H1 (cell line): ENCODE measurements at regions of chr5 and their contacts with region 1.

Region 1: GRCh38 chr5:159444441-159445082 is 114.3 kb upstream of the IL12B start:
- DNase-seq: no peak
- H3K4me3 ChIP-seq: no peak overlapping the region
- H3K27ac ChIP-seq: no peak overlapping the region
- H3K4me1 ChIP-seq: peaks cover 0 to 10% (median 2%) of the 10 kb centered on the region in 4 experiments; a peak in 4 of 7 replicates
- H3K27me3 ChIP-seq: no peaks in the 10 kb centered on the region
- CTCF ChIP-seq: peak in 2 of 3 experiments; percentile 35 to 46; a peak in 2 of 4 replicates
- EP300 ChIP-seq: no peak
- POLR2A ChIP-seq: no peak
- RAD21 ChIP-seq: peak; percentile 83 to 85

Region 2: DNA sequence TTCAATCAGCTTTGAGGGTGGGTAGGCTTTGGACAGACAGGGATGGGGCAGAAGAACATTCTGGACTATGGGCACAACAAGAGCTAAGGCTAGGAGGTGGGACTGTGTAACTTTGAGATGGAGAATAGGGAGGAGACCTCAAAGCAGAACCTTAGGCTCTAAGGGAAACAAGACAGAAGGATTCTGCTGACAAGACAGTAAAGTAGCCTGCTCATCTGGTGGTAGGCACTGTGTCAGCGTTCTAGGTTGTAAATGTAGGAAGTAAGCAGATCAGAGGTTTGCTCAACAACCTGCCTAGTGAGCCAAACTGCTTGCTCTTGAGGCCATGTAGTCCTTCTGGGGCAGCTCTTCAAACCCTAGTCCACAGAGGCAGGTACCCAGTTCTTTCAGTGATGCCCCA is 99.2 kb before region 1 on chr5:
- CTCF ChIA-PET with region 1: no interaction called
- POLR2A ChIA-PET with region 1: no interaction called
- DNase-seq: no peak
- H3K4me3 ChIP-seq: no peak overlapping the region
- H3K27ac ChIP-seq: no peak overlapping the region
- H3K4me1 ChIP-seq: no peaks in the 10 kb centered on the region
- H3K27me3 ChIP-seq: no peaks in the 10 kb centered on the region
- CTCF ChIP-seq: no peak
- EP300 ChIP-seq: no peak
- POLR2A ChIP-seq: no peak
- RAD21 ChIP-seq: no peak

Region 3: GRCh38 chr5:159409801-159410200 is 34.8 kb before region 1 on chr5:
- CTCF ChIA-PET with region 1: interaction called, 10 read pairs
- POLR2A ChIA-PET with region 1: no interaction called
- DNase-seq: no peak
- H3K4me3 ChIP-seq: no peak overlapping the region
- H3K27ac ChIP-seq: no peak overlapping the region
- H3K4me1 ChIP-seq: peaks cover 0 to 5% (median 3%) of the 10 kb centered on the region in 4 experiments; a peak in 3 of 7 replicates
- H3K27me3 ChIP-seq: no peaks in the 10 kb centered on the region
- CTCF ChIP-seq: no peak
- EP300 ChIP-seq: no peak
- POLR2A ChIP-seq: no peak
- RAD21 ChIP-seq: no peak

Region 4: DNA sequence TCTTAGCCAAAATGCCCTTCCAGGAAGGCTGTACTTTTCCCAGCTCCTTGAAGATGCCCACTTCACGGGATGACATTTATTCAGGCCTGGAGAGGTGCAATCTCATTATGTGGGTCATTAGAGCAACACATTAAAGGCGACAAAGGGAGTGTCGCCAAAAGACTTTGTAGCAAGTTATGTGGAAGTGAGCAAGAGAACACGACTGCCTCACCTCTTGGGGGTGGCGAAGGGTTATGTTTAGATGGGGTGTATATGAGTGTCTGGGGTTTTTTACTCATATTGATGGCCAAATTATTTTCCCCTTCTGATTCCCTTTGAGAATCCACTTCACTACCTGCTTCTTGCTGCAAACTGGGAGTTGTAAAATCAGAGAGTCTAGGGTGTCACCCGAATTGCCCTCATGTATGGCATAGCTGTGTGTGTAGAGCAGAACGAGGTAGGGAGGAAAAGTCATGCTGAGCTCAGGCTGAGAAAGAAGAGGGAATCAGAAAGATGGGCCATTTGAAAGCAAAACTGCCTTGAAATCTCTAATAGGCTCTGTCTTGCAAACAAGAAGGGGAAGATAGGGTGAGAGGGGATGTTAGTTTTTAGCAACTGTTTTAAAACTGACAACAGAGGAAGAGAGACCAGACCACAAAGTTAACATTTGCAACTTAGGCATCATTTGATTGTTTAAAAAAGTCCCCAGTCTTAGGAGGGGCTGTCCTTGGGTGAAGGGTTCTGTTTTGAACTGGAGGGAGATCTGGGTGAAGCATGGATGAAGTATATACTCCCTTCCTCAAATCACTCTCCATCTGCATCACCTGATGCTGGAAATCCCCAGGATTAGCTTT is 17.2 kb before region 1 on chr5:
- CTCF ChIA-PET with region 1: interaction called, 30 read pairs
- POLR2A ChIA-PET with region 1: no interaction called
- DNase-seq: no peak
- H3K4me3 ChIP-seq: no peak overlapping the region
- H3K27ac ChIP-seq: no peak overlapping the region
- H3K4me1 ChIP-seq: peaks cover 0 to 2% (median 0%) of the 10 kb centered on the region in 4 experiments; a peak in 1 of 7 replicates
- H3K27me3 ChIP-seq: peaks cover 0 to 1% (median 0%) of the 10 kb centered on the region in 4 experiments; a peak in 1 of 7 replicates
- CTCF ChIP-seq: no peak
- EP300 ChIP-seq: no peak
- POLR2A ChIP-seq: no peak
- RAD21 ChIP-seq: no peak

Region 5: GRCh38 chr5:159515909-159516415 is 71.4 kb after region 1 on chr5:
- CTCF ChIA-PET with region 1: interaction called, 34 read pairs
- POLR2A ChIA-PET with region 1: no interaction called
- DNase-seq: peak; percentile 58 to 84
- H3K4me3 ChIP-seq: no peak overlapping the region
- H3K27ac ChIP-seq: no peak overlapping the region
- H3K4me1 ChIP-seq: no peaks in the 10 kb centered on the region
- H3K27me3 ChIP-seq: no peaks in the 10 kb centered on the region
- CTCF ChIP-seq: peak; percentile 82 to 95 (median 86)
- EP300 ChIP-seq: no peak
- POLR2A ChIP-seq: no peak
- RAD21 ChIP-seq: peak; percentile 83 to 84

Region 6: DNA sequence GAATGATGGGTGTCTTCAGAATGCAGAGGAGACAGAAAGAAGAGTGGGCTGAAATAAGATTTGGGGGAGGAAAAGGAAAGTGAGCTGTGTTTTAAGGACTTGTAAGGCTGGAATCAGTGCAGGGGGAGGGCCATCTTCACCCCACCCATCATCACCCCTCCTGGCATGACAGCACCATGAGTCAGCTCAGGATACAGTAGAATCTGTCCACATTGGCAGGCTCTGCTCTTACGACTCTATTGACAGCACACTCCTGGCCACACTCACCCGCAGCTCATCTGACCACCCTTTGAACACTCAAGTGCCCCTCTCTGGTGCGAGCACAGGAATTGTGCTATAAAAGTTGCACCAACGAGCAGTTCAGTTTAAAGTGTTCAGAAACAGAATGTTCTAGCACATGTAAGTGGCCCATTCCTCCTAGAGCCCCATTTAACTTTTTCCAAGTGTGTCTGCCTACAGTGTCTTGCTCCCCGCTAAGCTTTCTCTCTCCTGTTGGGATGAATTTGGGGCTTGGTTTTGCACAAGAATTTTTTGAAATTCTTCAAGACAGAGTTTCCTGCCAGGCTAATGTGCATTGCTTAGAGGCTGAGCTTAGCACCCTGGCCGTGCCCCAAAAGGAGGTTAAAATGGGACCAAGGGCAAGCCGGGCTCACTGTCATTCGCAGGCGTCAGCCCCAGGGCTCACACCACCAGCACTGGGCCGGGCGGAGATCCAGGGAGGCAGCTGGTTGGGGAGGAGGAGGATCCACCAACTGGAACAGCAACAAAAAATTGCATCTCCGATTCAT is 483.8 kb after region 1 on chr5:
- CTCF ChIA-PET with region 1: interaction called, 10 read pairs
- POLR2A ChIA-PET with region 1: no interaction called
- DNase-seq: no peak
- H3K4me3 ChIP-seq: no peak overlapping the region
- H3K27ac ChIP-seq: no peak overlapping the region
- H3K4me1 ChIP-seq: peaks cover 0 to 2% (median 0%) of the 10 kb centered on the region in 4 experiments; a peak in 1 of 7 replicates
- H3K27me3 ChIP-seq: no peaks in the 10 kb centered on the region; a peak in 1 of 7 replicates
- CTCF ChIP-seq: no peak
- EP300 ChIP-seq: no peak
- POLR2A ChIP-seq: no peak
- RAD21 ChIP-seq: no peak

Region 7: GRCh38 chr5:159965031-159965837 is 520.7 kb after region 1 on chr5:
- CTCF ChIA-PET with region 1: interaction called, 21 read pairs
- POLR2A ChIA-PET with region 1: no interaction called
- DNase-seq: peak in 1 of 2 experiments; percentile 85
- H3K4me3 ChIP-seq: no peak overlapping the region
- H3K27ac ChIP-seq: no peak overlapping the region
- H3K4me1 ChIP-seq: no peaks in the 10 kb centered on the region
- H3K27me3 ChIP-seq: peaks cover under 1 to 2% (median under 1%) of the 10 kb centered on the region in 4 experiments; a peak in 4 of 7 replicates
- CTCF ChIP-seq: peak; percentile 73 to 89 (median 78)
- EP300 ChIP-seq: no peak
- POLR2A ChIP-seq: no peak
- RAD21 ChIP-seq: peak; percentile 88 to 92

Region 8: GRCh38 chr5:159987031-159987674 is 542.6 kb after region 1 on chr5:
- CTCF ChIA-PET with region 1: interaction called, 66 read pairs
- POLR2A ChIA-PET with region 1: no interaction called
- DNase-seq: peak; percentile 65 to 89
- H3K4me3 ChIP-seq: peak overlapping the region; percentile 9 to 62 (median 52)
- H3K27ac ChIP-seq: no peak overlapping the region
- H3K4me1 ChIP-seq: peaks cover 0 to 2% (median 0%) of the 10 kb centered on the region in 4 experiments; a peak in 1 of 7 replicates
- H3K27me3 ChIP-seq: peaks cover 4 to 15% (median 12%) of the 10 kb centered on the region in 4 experiments; a peak in 6 of 7 replicates
- CTCF ChIP-seq: peak; percentile 78 to 84 (median 79)
- EP300 ChIP-seq: peak in 1 of 2 experiments; percentile 71; a peak in 1 of 3 replicates
- POLR2A ChIP-seq: no peak
- RAD21 ChIP-seq: peak; percentile 87 to 91